ENCODE measurements at regions of chr16 and their contacts with region 1.

Region 1: DNA sequence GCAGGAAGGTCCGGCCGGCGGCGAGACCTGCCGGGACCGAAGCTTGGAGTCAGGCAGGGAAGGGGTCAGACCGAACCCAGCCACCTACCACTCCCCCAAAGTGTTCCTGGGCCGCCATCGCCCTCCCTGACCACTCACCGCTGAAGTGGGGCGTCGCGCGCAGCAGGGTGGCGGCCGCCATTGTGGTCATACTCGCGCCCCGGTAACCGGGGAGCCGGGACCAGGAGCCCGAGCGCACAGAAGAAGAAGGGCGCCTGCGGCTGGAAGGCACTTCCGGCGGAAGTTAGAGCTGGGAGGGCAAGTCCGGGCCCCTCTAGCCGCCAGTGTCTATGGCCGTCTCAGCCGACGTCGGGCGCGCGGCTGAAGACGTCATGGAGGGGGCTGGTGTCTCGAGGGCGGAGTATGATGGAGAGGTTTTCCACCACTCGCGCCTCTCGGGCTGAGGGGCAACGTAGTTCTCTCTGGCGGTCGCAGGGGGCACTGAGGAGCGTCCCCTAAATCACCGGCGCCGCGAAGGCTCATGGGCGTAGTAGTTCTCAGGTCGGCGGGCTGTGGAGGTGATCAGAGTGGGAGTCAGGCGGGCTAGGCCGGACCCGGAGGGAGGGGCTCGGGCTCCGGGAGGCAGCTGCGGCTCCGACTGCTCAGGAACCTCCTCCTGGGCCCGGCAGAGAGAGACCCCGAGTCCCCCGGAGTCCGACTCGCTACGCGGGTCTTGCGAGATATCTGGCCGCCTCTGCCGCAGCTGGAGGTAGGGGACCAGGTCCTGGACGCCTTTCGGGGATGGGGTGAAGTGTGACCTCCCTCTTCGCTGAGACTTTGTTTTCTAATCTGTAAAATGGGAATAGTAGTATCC is at the start of gene TUFM:
- DNase-seq: peak; percentile 97
- H3K4me3 ChIP-seq: peak within 1 kb of the TSS; percentile 90
- H3K4me3 Mint-ChIP-seq: peak within 1 kb of the TSS; percentile 92
- H3K27ac Mint-ChIP-seq: peak within 1 kb of the TSS; percentile 96
- H3K4me1 ChIP-seq: 0 out of 2 replicates have a peak, but pooled peaks cover 8% of the 10 kb centered on the region
- H3K4me1 Mint-ChIP-seq: no peaks in the 10 kb centered on the region
- H3K27me3 ChIP-seq: no peaks in the 10 kb centered on the region
- H3K27me3 Mint-ChIP-seq: no peaks in the 10 kb centered on the region
- CTCF ChIP-seq: peak; percentile 56 to 79
- total RNA-seq, gene TUFM: 207 and 234 TPM in 2 replicates

Region 2: DNA sequence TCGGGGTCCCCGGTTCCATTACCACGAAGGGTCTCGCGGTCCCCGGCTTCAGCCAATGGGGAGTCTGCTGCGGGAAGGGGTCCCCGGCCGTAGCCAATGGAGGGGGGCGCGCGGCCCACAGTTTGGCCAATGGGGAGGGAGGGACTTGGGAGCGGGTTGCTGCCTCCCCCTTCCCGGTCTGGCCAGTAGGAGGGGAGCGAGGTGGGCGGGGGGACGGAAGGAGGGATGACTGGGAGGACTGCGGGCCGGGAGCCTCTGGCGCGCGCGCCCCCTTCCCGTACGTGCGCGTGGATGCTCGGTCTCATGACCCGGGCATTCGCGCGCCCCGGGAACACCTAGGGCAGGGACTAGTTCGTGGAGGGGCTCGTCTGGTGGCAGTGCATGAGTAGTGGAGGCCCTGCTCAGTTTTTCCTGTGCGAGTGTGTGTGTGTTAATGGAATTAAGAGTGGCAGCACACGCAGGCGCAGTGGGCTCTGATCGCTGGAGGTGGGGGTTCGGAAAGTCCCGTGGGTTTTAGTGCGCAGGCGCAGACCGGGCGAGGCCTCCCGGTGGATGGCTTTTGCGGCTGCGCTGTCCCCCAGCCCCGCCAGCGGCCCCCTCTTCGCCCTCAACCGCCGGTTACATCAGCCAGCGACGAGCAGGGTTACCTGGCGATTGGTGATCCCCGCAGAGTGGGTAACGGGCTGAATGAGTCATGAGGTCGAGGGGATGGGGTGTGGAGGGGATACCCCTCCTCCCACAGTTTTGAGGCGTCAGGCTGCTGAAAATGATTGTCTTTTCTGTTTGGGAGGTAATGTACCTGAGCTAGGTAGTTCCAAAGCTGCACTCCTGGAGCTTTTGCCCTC is 22.2 kb before region 1 on chr16:
- CTCF ChIA-PET with region 1: no interaction called
- POLR2A ChIA-PET with region 1: interaction called, 14 read pairs
- intact Hi-C with region 1: loop called (anchors 1 kb)
- DNase-seq: peak; percentile 97 to 98
- H3K4me3 ChIP-seq: peak overlapping the region; percentile 93
- H3K4me3 Mint-ChIP-seq: peak overlapping the region; percentile 100
- H3K27ac Mint-ChIP-seq: peak overlapping the region; percentile 100
- H3K4me1 ChIP-seq: no peaks in the 10 kb centered on the region; the same call in 1 of the 2 replicates
- H3K4me1 Mint-ChIP-seq: peaks cover 14% of the 10 kb centered on the region
- H3K27me3 ChIP-seq: no peaks in the 10 kb centered on the region
- H3K27me3 Mint-ChIP-seq: no peaks in the 10 kb centered on the region
- CTCF ChIP-seq: peak in 1 of 2 experiments; percentile 28

Region 3: GRCh38 chr16:28863929-28864793 is 17.9 kb after region 1 on chr16:
- CTCF ChIA-PET with region 1: interaction called, 5 read pairs
- POLR2A ChIA-PET with region 1: interaction called, 15 read pairs
- intact Hi-C with region 1: loop called (anchors 1 kb)
- DNase-seq: no peak
- H3K4me3 ChIP-seq: peak overlapping the region; percentile 48
- H3K4me3 Mint-ChIP-seq: peak overlapping the region; percentile 94
- H3K27ac Mint-ChIP-seq: peak overlapping the region; percentile 96
- H3K4me1 ChIP-seq: peaks cover 12% of the 10 kb centered on the region
- H3K4me1 Mint-ChIP-seq: peaks cover 13% of the 10 kb centered on the region
- H3K27me3 ChIP-seq: no peaks in the 10 kb centered on the region
- H3K27me3 Mint-ChIP-seq: no peaks in the 10 kb centered on the region
- CTCF ChIP-seq: no peak

Region 4: DNA sequence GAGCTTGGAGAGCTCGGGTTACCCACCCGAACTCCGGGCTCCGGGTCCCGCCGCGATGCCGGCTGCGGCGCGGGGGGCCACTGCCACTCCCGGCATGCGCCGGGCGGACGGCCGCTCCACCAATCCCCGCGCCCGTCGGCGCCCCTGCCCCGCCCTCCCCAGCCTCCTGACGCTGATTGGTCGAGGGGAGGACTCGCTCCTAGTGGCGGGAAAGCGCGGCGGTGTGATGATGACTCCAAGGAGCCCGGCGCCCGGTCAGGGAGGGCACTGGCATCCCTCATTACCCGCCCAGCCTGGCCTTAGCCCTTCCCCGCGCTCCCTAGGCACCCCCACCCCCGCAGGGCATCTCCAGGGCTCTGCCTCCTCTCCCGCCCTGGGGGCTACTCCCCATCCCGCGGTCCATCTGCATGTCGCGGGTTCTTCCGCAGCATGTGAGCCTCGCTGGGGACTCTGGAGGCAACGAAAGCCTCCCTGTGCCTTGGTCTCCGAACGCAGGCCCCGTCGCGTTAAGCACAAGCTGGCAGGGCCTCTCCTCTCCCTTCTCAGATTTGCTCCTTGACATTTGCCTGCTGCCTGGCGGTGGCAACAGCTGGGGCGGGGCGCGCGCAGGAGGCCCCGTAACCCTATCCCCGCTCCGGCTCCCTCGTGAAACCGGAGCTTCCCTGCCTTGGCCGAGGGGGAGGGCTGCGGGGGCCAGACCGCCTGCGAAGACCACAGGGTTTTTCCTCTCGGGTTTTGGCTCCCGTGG is 33.7 kb after region 1 on chr16:
- CTCF ChIA-PET with region 1: no interaction called
- POLR2A ChIA-PET with region 1: interaction called, 3 read pairs
- intact Hi-C with region 1: loop called (anchors 1 kb)
- DNase-seq: peak; percentile 86 to 90
- H3K4me3 ChIP-seq: peak overlapping the region; percentile 63
- H3K4me3 Mint-ChIP-seq: peak overlapping the region; percentile 89
- H3K27ac Mint-ChIP-seq: peak overlapping the region; percentile 80
- H3K4me1 ChIP-seq: peaks cover 5% of the 10 kb centered on the region; the same call in 1 of the 2 replicates
- H3K4me1 Mint-ChIP-seq: no peaks in the 10 kb centered on the region
- H3K27me3 ChIP-seq: no peaks in the 10 kb centered on the region
- H3K27me3 Mint-ChIP-seq: no peaks in the 10 kb centered on the region
- CTCF ChIP-seq: no peak

Region 5: GRCh38 chr16:28958836-28959235 is 112.5 kb after region 1 on chr16:
- CTCF ChIA-PET with region 1: no interaction called
- POLR2A ChIA-PET with region 1: no interaction called
- intact Hi-C with region 1: no loop called
- DNase-seq: no peak
- H3K4me3 ChIP-seq: no peak overlapping the region
- H3K4me3 Mint-ChIP-seq: no peak overlapping the region
- H3K27ac Mint-ChIP-seq: no peak overlapping the region
- H3K4me1 ChIP-seq: no peaks in the 10 kb centered on the region
- H3K4me1 Mint-ChIP-seq: no peaks in the 10 kb centered on the region
- H3K27me3 ChIP-seq: no peaks in the 10 kb centered on the region
- H3K27me3 Mint-ChIP-seq: no peaks in the 10 kb centered on the region
- CTCF ChIP-seq: no peak

Measured in Caco-2 (cell line).